MCF 10A (cell line): ENCODE measurements at regions of chr13 and their contacts with region 1.

Region 1: GRCh38 chr13:52862358-52863206 is 14.1 kb upstream of the PCDH8 start:
- DNase-seq: peak; percentile 53
- H3K4me3 Mint-ChIP-seq: no peak overlapping the region
- H3K27ac Mint-ChIP-seq: no peak overlapping the region
- H3K4me1 Mint-ChIP-seq: no peaks in the 10 kb centered on the region
- H3K27me3 Mint-ChIP-seq: peaks cover 19% of the 10 kb centered on the region
- CTCF ChIP-seq: peak; percentile 80

Region 2: DNA sequence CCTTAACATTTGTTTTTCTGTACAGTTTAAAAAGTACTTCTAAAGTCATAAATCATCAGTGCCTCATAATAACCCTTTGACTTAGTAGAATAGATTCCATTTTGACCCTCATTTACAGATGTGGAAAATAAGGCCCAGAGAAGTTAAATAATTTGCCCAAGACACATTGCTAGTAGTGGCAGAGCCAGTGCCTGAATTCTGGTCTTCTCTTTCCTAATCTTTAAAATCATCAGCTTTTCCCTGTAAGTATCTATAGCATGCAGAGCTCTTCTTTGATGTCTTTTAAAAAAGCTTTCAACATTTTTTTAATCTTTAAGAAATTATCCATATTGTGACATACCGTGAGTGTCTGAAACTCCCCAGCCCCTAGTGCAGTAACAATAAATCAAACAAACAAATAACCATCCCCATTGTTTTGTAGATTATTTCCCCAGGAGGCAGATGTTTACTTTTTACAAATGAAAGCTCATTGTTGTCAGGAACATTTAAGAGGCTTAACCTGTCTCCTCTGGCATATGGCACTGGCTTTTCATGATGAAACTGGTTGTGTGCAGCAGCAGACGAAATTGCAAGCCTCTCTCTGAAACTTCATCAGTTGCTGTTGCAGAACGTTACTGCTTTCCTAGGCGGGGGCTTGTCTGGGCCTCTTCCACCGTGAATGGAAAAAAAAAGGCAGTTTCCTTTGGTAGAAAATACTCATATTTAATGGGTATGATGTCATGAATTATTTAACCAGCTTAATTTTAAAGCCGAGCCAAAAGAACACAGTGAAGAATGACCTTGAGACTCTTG is 17.6 kb after region 1 on chr13:
- CTCF ChIA-PET with region 1: interaction called, 13 read pairs
- POLR2A ChIA-PET with region 1: no interaction called
- intact Hi-C with region 1: no loop called
- DNase-seq: no peak
- H3K4me3 Mint-ChIP-seq: no peak overlapping the region
- H3K27ac Mint-ChIP-seq: no peak overlapping the region
- H3K4me1 Mint-ChIP-seq: no peaks in the 10 kb centered on the region
- H3K27me3 Mint-ChIP-seq: peaks cover 30% of the 10 kb centered on the region
- CTCF ChIP-seq: no peak

Region 3: GRCh38 chr13:53151336-53152056 is 288.9 kb after region 1 on chr13:
- CTCF ChIA-PET with region 1: no interaction called
- POLR2A ChIA-PET with region 1: no interaction called
- intact Hi-C with region 1: loop called (anchors 10 kb)
- DNase-seq: peak; percentile 78
- H3K4me3 Mint-ChIP-seq: no peak overlapping the region
- H3K27ac Mint-ChIP-seq: no peak overlapping the region
- H3K4me1 Mint-ChIP-seq: peaks cover 12% of the 10 kb centered on the region
- H3K27me3 Mint-ChIP-seq: peaks cover 29% of the 10 kb centered on the region
- CTCF ChIP-seq: peak; percentile 73

Region 4: GRCh38 chr13:53191091-53191490 is 328.5 kb after region 1 on chr13:
- CTCF ChIA-PET with region 1: interaction called, 4 read pairs
- POLR2A ChIA-PET with region 1: no interaction called
- intact Hi-C with region 1: loop called (anchors 10 kb)
- DNase-seq: peak; percentile 83
- H3K4me3 Mint-ChIP-seq: no peak overlapping the region
- H3K27ac Mint-ChIP-seq: no peak overlapping the region
- H3K4me1 Mint-ChIP-seq: peaks cover 13% of the 10 kb centered on the region
- H3K27me3 Mint-ChIP-seq: no peaks in the 10 kb centered on the region
- CTCF ChIP-seq: no peak